PC-3 (cell line): ENCODE measurements at regions of chr12 and their contacts with region 1.

Region 1: GRCh38 chr12:43728117-43728516 is 30.5 kb downstream of the PUS7L start:
- DNase-seq: peak; percentile 49
- ATAC-seq: no peak
- H3K4me3 ChIP-seq: no peak overlapping the region
- H3K27ac ChIP-seq: no peak overlapping the region
- H3K4me1 ChIP-seq: no peaks in the 10 kb centered on the region
- H3K27me3 ChIP-seq: no peaks in the 10 kb centered on the region
- CTCF ChIP-seq: peak; percentile 54

Region 2: GRCh38 chr12:43277651-43278540 is 450.2 kb before region 1 on chr12:
- CTCF ChIA-PET with region 1: no interaction called
- POLR2A ChIA-PET with region 1: no interaction called
- intact Hi-C with region 1: no loop called
- DNase-seq: peak; percentile 92
- ATAC-seq: peak; percentile 99
- H3K4me3 ChIP-seq: peak overlapping the region; percentile 52
- H3K27ac ChIP-seq: peak overlapping the region; percentile 91
- H3K4me1 ChIP-seq: peaks cover 36% of the 10 kb centered on the region
- H3K27me3 ChIP-seq: no peaks in the 10 kb centered on the region
- CTCF ChIP-seq: no peak

Region 3: DNA sequence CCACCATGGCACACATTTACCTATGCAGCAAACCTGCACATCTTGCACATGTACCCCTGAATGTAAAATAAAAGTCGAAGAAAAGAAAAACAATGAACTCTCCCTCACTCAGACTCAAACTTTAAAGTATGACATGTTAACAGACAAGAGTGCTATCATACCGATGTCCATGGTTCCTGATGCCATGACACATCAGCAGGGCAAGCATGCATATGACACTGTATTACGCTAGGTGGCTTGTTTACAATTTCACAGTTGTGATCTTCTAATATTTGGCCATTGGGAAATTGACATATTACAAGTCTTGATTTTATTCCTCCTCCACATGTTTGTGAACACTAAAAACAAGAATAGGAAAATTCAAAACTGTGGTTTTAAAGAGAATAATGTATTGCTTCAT is 302.8 kb before region 1 on chr12:
- CTCF ChIA-PET with region 1: no interaction called
- POLR2A ChIA-PET with region 1: no interaction called
- intact Hi-C with region 1: no loop called
- DNase-seq: no peak
- ATAC-seq: no peak
- H3K4me3 ChIP-seq: no peak overlapping the region
- H3K27ac ChIP-seq: no peak overlapping the region
- H3K4me1 ChIP-seq: no peaks in the 10 kb centered on the region
- H3K27me3 ChIP-seq: no peaks in the 10 kb centered on the region
- CTCF ChIP-seq: no peak

Region 4: DNA sequence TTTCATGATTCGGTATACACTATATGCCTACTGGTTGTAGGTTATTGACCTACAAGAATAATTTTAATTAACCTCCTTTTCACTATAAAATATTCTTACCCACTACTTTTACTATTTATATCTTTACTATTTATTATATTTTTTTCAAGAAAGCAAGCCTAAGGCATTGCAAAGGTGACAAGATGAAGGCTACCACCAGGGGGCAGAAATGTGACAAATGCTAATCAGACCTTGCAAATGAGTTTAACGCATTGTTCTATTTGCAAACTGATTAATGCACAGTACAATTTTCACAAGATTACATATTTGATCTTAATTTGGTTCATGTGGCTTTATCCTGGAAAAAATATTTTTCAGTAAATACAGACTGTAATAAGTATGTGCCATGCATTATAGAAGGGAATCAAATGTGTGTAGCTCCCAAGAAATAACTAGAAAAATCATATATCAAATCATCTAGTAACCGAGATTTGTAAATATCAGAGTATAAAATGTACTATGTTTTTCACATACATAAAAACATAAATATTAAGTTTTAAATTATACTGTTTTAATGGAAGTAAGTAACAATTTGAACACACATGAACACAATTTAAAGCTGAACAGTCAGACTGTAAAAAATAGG is 283.1 kb before region 1 on chr12:
- CTCF ChIA-PET with region 1: no interaction called
- POLR2A ChIA-PET with region 1: no interaction called
- intact Hi-C with region 1: loop called (anchors 10 kb)
- DNase-seq: peak; percentile 74
- ATAC-seq: peak; percentile 54; the same call in 1 of the 2 replicates
- H3K4me3 ChIP-seq: no peak overlapping the region
- H3K27ac ChIP-seq: no peak overlapping the region
- H3K4me1 ChIP-seq: no peaks in the 10 kb centered on the region
- H3K27me3 ChIP-seq: no peaks in the 10 kb centered on the region
- CTCF ChIP-seq: peak; percentile 82

Region 5: GRCh38 chr12:43501703-43502102 is 226.4 kb before region 1 on chr12:
- CTCF ChIA-PET with region 1: no interaction called
- POLR2A ChIA-PET with region 1: no interaction called
- intact Hi-C with region 1: loop called (anchors 1 kb)
- DNase-seq: peak; percentile 47
- ATAC-seq: no peak
- H3K4me3 ChIP-seq: no peak overlapping the region
- H3K27ac ChIP-seq: no peak overlapping the region
- H3K4me1 ChIP-seq: no peaks in the 10 kb centered on the region
- H3K27me3 ChIP-seq: no peaks in the 10 kb centered on the region; the same call in 1 of the 2 replicates
- CTCF ChIP-seq: peak; percentile 85

Region 6: GRCh38 chr12:43766291-43766690 is 38.2 kb after region 1 on chr12:
- CTCF ChIA-PET with region 1: no interaction called
- POLR2A ChIA-PET with region 1: no interaction called
- intact Hi-C with region 1: no loop called
- DNase-seq: peak; percentile 8
- ATAC-seq: no peak
- H3K4me3 ChIP-seq: no peak overlapping the region
- H3K27ac ChIP-seq: no peak overlapping the region
- H3K4me1 ChIP-seq: peaks cover 7% of the 10 kb centered on the region
- H3K27me3 ChIP-seq: no peaks in the 10 kb centered on the region
- CTCF ChIP-seq: no peak